Activated CD4-positive, alpha-beta memory T cell treated with anti-CD3 and anti-CD28 coated beads for 36 hours (primary cell): ENCODE measurements at regions of chr5 and their contacts with region 1.

Region 1: DNA sequence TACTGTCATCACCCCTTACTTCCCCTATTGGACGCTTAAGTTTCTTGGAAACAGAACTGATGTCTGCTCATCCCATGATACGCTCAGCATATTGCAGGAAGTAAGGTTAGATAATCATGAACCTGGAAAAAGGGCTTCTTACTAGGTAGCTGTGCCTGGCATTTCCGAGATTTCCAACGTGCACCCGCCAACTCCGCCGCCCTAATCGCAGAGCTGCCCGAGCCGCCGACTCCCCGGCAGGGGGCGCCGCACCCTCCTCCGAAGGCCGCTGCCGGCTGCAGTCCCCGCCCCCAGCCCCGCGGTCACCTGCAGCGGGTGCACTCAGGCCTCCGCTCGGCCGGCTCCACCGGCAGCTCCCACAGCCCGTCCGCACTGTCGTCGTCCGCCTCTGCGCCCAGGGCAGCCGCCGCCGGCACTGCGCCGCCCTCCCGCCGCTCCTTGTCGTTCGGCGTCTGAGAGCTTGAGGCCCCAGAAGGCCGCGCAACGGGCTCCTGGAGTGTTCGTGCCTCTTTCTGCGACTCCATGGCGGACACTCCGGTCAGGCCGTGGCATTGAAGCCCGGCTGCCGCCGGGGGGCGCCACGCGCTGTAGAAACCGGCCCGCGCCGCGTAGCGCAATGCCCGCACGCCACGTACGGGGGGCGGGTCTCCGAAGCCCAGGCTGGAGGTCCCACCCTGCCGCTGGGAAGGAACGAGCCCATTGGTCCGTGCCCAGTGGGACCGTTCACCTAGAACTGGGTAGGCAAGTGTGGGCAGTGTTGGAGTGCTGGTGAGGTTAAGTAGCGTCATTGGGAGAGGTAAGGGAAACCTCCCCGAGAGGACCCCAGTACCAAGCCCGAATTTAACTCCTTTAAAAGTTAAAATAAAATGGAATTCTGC is at the start of gene DTWD2:
- DNase-seq: peak; percentile 95
- H3K4me3 Mint-ChIP-seq: peak within 1 kb of the TSS; percentile 70
- H3K27ac Mint-ChIP-seq: peak within 1 kb of the TSS; percentile 40
- H3K4me1 Mint-ChIP-seq: peaks cover 14% of the 10 kb centered on the region
- H3K27me3 Mint-ChIP-seq: no peaks in the 10 kb centered on the region
- total RNA-seq, gene DTWD2: 2.3 to 2.8 TPM

Region 2: GRCh38 chr5:119070828-119071572 is 82.8 kb after region 1 on chr5 and contains the start of gene DMXL1:
- CTCF ChIA-PET with region 1: interaction called, 6 read pairs
- POLR2A ChIA-PET with region 1: no interaction called
- intact Hi-C with region 1: loop called (anchors 1 kb)
- DNase-seq: peak; percentile 99
- H3K4me3 Mint-ChIP-seq: peak within 1 kb of the TSS; percentile 85
- H3K27ac Mint-ChIP-seq: peak within 1 kb of the TSS; percentile 96
- H3K4me1 Mint-ChIP-seq: peaks cover 40% of the 10 kb centered on the region
- H3K27me3 Mint-ChIP-seq: peaks cover 2% of the 10 kb centered on the region
- total RNA-seq, gene DMXL1: 24.2 to 26.9 TPM

Region 3: DNA sequence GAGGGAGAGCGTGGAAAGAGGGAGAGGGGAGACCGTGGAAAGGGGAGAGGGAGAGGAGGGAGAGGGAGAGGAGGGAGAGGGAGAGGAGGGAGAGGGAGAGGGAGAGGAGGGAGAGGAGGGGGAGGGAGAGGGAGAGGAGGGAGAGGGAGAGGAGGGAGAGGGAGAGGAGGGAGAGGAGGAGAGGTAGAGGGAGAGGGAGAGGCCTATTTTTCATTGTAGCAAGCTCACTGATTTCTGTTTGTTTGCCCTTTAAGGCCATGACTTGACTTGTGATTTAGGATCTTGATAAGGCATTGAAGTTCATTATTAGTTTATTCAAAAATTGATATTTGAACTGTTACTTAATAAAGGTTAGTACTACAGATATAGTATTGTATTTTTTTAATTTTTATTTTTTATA is 135.1 kb after region 1 on chr5:
- CTCF ChIA-PET with region 1: no interaction called
- POLR2A ChIA-PET with region 1: no interaction called
- intact Hi-C with region 1: no loop called
- DNase-seq: no peak
- H3K4me3 Mint-ChIP-seq: no peak overlapping the region
- H3K27ac Mint-ChIP-seq: no peak overlapping the region
- H3K4me1 Mint-ChIP-seq: no peaks in the 10 kb centered on the region
- H3K27me3 Mint-ChIP-seq: no peaks in the 10 kb centered on the region

Region 4: GRCh38 chr5:119315516-119315949 is 327.3 kb after region 1 on chr5:
- CTCF ChIA-PET with region 1: interaction called, 8 read pairs
- POLR2A ChIA-PET with region 1: interaction called, 4 read pairs
- intact Hi-C with region 1: loop called (anchors 5 kb)
- DNase-seq: peak; percentile 78
- H3K4me3 Mint-ChIP-seq: peak overlapping the region; percentile 30
- H3K27ac Mint-ChIP-seq: peak overlapping the region; percentile 89
- H3K4me1 Mint-ChIP-seq: peaks cover 93% of the 10 kb centered on the region
- H3K27me3 Mint-ChIP-seq: no peaks in the 10 kb centered on the region

Region 5: GRCh38 chr5:119397518-119398380 is 409.5 kb after region 1 on chr5:
- CTCF ChIA-PET with region 1: interaction called, 11 read pairs
- POLR2A ChIA-PET with region 1: no interaction called
- intact Hi-C with region 1: no loop called
- DNase-seq: peak; percentile 50
- H3K4me3 Mint-ChIP-seq: peak overlapping the region; percentile 39
- H3K27ac Mint-ChIP-seq: peak overlapping the region; percentile 90
- H3K4me1 Mint-ChIP-seq: peaks cover 84% of the 10 kb centered on the region
- H3K27me3 Mint-ChIP-seq: no peaks in the 10 kb centered on the region

Region 6: GRCh38 chr5:119452373-119453039 is 464.3 kb after region 1 on chr5 and contains the start of gene HSD17B4:
- CTCF ChIA-PET with region 1: interaction called, 15 read pairs
- POLR2A ChIA-PET with region 1: no interaction called
- intact Hi-C with region 1: loop called (anchors 1 kb)
- DNase-seq: peak; percentile 88
- H3K4me3 Mint-ChIP-seq: peak within 1 kb of the TSS; percentile 92
- H3K27ac Mint-ChIP-seq: peak within 1 kb of the TSS; percentile 79
- H3K4me1 Mint-ChIP-seq: peaks cover 14% of the 10 kb centered on the region
- H3K27me3 Mint-ChIP-seq: no peaks in the 10 kb centered on the region
- total RNA-seq, gene HSD17B4: 83.2 to 117 TPM